Endothelial cell of umbilical vein (primary cell): ENCODE measurements at regions of chr6 and their contacts with region 1.

Region 1: DNA sequence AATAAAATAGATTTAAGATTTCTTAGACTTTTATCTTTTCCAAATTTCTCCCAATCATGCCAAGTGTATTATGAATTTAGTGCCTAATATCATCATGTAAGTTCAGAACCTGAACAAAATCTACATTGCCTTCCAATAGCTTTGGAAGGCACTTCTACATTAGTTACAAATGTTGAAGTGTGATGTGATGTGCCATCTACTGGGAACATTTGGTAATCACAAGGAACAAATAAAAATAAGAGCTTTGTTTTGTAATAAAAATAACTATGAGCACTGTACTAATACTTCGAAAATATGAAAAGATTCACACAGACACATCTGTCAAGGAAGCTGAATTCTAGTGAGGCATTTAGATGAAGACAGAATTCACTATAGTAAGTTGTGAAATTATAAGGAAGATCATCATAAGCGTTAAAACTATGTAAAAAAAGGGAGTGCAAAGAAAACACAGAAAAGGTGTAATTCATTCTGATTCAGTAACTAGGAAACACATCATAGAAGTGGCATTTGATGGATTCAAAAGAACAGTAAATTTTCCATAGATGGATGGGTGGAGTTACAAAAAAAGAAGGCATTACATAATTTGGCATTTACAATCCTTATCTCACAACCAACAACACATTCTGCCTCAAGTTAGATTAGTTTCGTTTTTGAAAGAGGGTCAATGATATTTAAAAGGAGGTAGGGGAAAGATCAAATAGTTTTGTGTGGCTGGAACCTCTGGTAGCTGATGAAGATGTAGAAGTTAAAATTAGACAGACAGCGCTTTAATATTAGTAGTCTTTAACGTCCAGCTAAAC is 161.0 kb downstream of the ASCC3 start:
- DNase-seq: peak; percentile 76
- H3K4me3 ChIP-seq: peak overlapping the region; percentile 16 to 83 (median 53)
- H3K27ac ChIP-seq: peak overlapping the region; percentile 48
- H3K4me1 ChIP-seq: peaks cover 4% of the 10 kb centered on the region
- H3K27me3 ChIP-seq: no peaks in the 10 kb centered on the region
- CTCF ChIP-seq: peak; percentile 18 to 22
- POLR2A ChIP-seq: no peak

Region 2: DNA sequence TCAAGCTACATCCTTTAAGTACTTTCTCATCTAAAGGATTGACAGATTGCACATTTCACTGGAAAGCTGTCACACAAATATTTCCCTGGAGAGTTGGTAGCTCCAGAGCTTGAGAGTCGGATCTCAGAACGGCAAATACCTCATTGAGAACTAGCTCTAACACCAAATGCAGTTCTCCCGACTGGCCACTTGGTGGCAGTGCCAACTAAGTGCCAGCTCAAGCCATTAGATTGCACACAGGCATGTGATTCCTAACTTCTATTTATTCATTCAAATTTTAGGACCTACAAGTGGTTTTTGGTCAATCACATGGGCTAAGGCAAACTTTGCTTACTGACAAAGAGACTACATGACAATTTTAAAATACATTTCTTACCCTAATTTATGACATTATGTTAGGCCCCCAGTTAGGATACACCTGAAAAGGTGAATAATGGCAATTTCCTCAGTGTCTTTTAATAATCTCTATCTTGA is 718.1 kb before region 1 on chr6:
- CTCF ChIA-PET with region 1: interaction called, 15 read pairs
- POLR2A ChIA-PET with region 1: no interaction called
- dilution Hi-C with region 1: no loop called
- intact Hi-C with region 1: no loop called
- DNase-seq: peak; percentile 45
- H3K4me3 ChIP-seq: no peak overlapping the region
- H3K27ac ChIP-seq: no peak overlapping the region
- H3K4me1 ChIP-seq: no peaks in the 10 kb centered on the region
- H3K27me3 ChIP-seq: peaks cover 7 to 32% of the 10 kb centered on the region in 2 experiments
- CTCF ChIP-seq: peak; percentile 89
- POLR2A ChIP-seq: no peak

Region 3: GRCh38 chr6:100664274-100665040 is 55.6 kb before region 1 on chr6:
- CTCF ChIA-PET with region 1: interaction called, 16 read pairs
- POLR2A ChIA-PET with region 1: no interaction called
- dilution Hi-C with region 1: no loop called
- intact Hi-C with region 1: no loop called
- DNase-seq: peak; percentile 40
- H3K4me3 ChIP-seq: no peak overlapping the region
- H3K27ac ChIP-seq: no peak overlapping the region
- H3K4me1 ChIP-seq: peaks cover 4% of the 10 kb centered on the region
- H3K27me3 ChIP-seq: no peaks in the 10 kb centered on the region
- CTCF ChIP-seq: peak; percentile 26 to 32
- POLR2A ChIP-seq: no peak

Region 4: GRCh38 chr6:100691972-100692371 is 28.1 kb before region 1 on chr6:
- CTCF ChIA-PET with region 1: interaction called, 15 read pairs
- POLR2A ChIA-PET with region 1: no interaction called
- dilution Hi-C with region 1: no loop called
- intact Hi-C with region 1: no loop called
- DNase-seq: no peak
- H3K4me3 ChIP-seq: no peak overlapping the region
- H3K27ac ChIP-seq: no peak overlapping the region
- H3K4me1 ChIP-seq: no peaks in the 10 kb centered on the region
- H3K27me3 ChIP-seq: no peaks in the 10 kb centered on the region
- CTCF ChIP-seq: no peak
- POLR2A ChIP-seq: no peak

Region 5: DNA sequence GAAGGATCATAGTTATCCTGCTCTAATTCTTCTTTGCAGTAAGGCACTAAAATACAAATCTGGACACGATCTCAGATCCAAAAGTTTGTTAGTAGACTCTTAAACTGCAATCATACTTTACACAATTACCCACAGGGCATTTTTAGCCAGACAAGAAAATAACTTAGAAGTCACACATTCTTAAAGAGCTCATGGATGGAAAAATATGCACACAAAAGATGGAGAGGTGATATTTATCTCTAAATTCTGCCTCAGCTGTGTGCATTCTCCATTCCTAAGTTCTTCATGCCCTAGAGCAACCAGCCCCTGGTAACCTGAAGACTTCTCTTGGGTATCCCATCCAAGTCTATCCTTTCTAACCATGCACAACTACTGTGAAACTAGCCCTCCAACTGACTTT is 10.0 kb before region 1 on chr6:
- CTCF ChIA-PET with region 1: interaction called, 30 read pairs
- POLR2A ChIA-PET with region 1: no interaction called
- dilution Hi-C with region 1: no loop called
- intact Hi-C with region 1: no loop called
- DNase-seq: no peak
- H3K4me3 ChIP-seq: no peak overlapping the region
- H3K27ac ChIP-seq: no peak overlapping the region
- H3K4me1 ChIP-seq: no peaks in the 10 kb centered on the region
- H3K27me3 ChIP-seq: no peaks in the 10 kb centered on the region
- CTCF ChIP-seq: no peak
- POLR2A ChIP-seq: no peak

Region 6: GRCh38 chr6:100745419-100746041 is 25.4 kb after region 1 on chr6:
- CTCF ChIA-PET with region 1: interaction called, 13 read pairs
- POLR2A ChIA-PET with region 1: no interaction called
- dilution Hi-C with region 1: no loop called
- intact Hi-C with region 1: no loop called
- DNase-seq: no peak
- H3K4me3 ChIP-seq: no peak overlapping the region
- H3K27ac ChIP-seq: no peak overlapping the region
- H3K4me1 ChIP-seq: no peaks in the 10 kb centered on the region
- H3K27me3 ChIP-seq: no peaks in the 10 kb centered on the region
- CTCF ChIP-seq: no peak
- POLR2A ChIP-seq: no peak

Region 7: GRCh38 chr6:101276066-101276465 is 556.0 kb after region 1 on chr6:
- CTCF ChIA-PET with region 1: no interaction called
- POLR2A ChIA-PET with region 1: no interaction called
- dilution Hi-C with region 1: no loop called
- intact Hi-C with region 1: no loop called
- DNase-seq: no peak
- H3K4me3 ChIP-seq: no peak overlapping the region
- H3K27ac ChIP-seq: no peak overlapping the region
- H3K4me1 ChIP-seq: no peaks in the 10 kb centered on the region
- H3K27me3 ChIP-seq: no peaks in the 10 kb centered on the region
- CTCF ChIP-seq: no peak
- POLR2A ChIP-seq: no peak